ENCODE measurements at regions of chr15 and their contacts with region 1.

Region 1: GRCh38 chr15:45802140-45802539 is 167.3 kb downstream of the SQOR start:
- DNase-seq: no peak
- ATAC-seq: no peak
- H3K4me3 Mint-ChIP-seq: no peak overlapping the region
- H3K27ac Mint-ChIP-seq: no peak overlapping the region
- H3K4me1 Mint-ChIP-seq: no peaks in the 10 kb centered on the region
- H3K27me3 Mint-ChIP-seq: peaks cover 2% of the 10 kb centered on the region

Region 2: GRCh38 chr15:45790325-45790943 is 11.7 kb before region 1 on chr15:
- CTCF ChIA-PET with region 1: interaction called, 11 read pairs
- POLR2A ChIA-PET with region 1: no interaction called
- DNase-seq: peak; percentile 36
- ATAC-seq: no peak
- H3K4me3 Mint-ChIP-seq: no peak overlapping the region
- H3K27ac Mint-ChIP-seq: no peak overlapping the region
- H3K4me1 Mint-ChIP-seq: no peaks in the 10 kb centered on the region
- H3K27me3 Mint-ChIP-seq: peaks cover 15% of the 10 kb centered on the region

Measured in activated CD8-positive, alpha-beta T cell treated with anti-CD3 and anti-CD28 coated beads, Interleukin-2, amount 10 ng/mL, durations not matched to agents 7 days and 5 days (primary cell).